ENCODE measurements at regions of chr17 and their contacts with region 1.

Region 1: GRCh38 chr17:48878918-48879898 is 13.4 kb upstream of the ATP5MC1 start:
- DNase-seq: peak; percentile 48
- H3K4me3 ChIP-seq: no peak overlapping the region
- H3K27ac ChIP-seq: no peak overlapping the region
- H3K4me1 ChIP-seq: no peaks in the 10 kb centered on the region
- H3K27me3 ChIP-seq: no peaks in the 10 kb centered on the region
- CTCF ChIP-seq: peak; percentile 94 to 98

Region 2: DNA sequence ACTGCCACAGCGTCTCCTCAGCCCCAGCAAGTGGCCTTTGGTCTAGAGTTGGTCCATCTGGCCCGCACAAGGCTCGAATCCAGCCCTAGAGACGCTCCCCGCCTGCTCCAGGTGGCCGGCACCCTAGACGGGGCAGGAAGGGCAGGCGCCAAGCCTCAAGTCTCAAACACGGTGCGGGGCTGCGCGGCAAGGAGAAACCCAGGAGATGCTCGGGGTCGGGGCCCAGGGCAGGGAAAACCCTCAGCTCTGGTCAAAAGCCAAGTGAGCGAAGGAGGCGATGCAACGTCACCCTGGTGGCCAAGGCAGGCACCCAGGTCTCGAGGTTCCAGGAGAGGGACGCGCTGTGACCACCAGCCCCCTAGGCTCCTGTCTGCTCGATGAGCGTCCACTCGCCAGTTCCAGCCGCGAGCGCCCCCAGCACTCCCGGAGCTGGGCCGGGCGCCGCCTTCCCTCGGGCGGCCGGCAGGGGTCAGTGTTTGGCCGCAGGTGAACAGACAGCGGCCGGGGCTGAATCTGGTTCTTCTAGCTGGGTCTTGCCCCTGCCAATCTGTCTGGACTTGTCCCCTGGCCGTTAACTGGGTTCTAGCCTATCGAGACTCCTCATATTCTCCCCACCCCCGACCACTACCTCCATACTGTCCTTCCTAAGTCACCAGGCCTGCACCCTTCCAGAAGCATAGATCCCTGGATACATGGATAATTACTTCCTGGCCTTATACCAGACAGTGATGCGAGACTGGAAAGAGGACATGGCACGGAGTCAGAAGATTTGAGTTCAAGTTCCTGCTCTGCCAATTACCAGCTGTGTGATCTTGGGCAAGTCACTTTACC is 200.9 kb before region 1 on chr17:
- CTCF ChIA-PET with region 1: interaction called, 10 read pairs
- dilution Hi-C with region 1: no loop called
- in situ Hi-C with region 1: loop called (anchors 5 kb)
- intact Hi-C with region 1: loop called (anchors 1 kb)
- DNase-seq: peak; percentile 69
- H3K4me3 ChIP-seq: no peak overlapping the region
- H3K27ac ChIP-seq: no peak overlapping the region
- H3K4me1 ChIP-seq: peaks cover 10% of the 10 kb centered on the region
- H3K27me3 ChIP-seq: peaks cover 2% of the 10 kb centered on the region
- CTCF ChIP-seq: peak; percentile 78 to 96

Region 3: DNA sequence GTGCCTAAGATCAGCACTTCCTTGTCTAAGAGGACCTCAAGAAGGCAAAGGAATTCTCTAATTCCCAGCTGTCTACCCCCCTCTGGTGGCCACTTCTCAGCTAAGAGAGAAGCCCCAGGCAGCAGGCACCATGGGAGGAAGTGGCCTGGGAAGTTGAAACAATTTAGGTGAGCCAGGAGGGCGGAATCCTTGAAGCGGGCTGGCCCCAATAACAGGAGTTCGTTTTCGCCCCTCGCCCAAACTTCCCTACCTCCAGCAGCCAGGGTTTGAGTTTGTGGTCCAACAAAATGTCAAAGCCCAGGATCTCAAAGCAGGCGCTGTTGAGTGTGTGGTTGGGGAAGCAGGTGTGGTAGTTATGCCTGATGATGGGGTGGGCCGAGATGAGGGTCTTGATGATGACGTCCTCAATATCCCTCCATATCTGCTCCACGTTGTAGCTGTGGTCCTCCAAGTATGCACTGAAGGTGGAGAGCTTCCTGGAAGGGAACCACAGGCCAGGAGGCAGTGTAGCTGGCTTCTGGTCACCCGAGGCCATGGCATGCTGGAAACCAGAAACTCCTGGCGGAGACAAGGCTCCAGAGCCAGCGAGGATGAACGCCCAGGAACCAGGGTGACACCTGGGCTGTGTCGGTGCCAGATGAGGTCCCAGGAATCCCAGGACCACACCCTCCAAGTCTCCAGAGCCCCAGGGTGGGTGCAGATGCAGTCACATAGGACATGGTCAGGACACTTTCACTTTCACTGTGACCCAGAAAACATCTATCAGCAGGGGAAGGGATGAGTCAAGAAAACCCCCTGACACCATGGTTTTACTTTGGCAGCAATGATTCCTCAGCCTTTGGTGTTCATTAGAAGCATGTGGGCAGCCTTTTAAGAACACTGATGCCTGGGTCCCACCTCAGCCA is 87.8 kb before region 1 on chr17:
- CTCF ChIA-PET with region 1: interaction called, 3 read pairs
- dilution Hi-C with region 1: no loop called
- in situ Hi-C with region 1: no loop called
- intact Hi-C with region 1: loop called (anchors 1 kb)
- DNase-seq: peak; percentile 68
- H3K4me3 ChIP-seq: no peak overlapping the region
- H3K27ac ChIP-seq: no peak overlapping the region
- H3K4me1 ChIP-seq: no peaks in the 10 kb centered on the region
- H3K27me3 ChIP-seq: no peaks in the 10 kb centered on the region
- CTCF ChIP-seq: peak; percentile 72 to 82

Region 4: GRCh38 chr17:48816774-48817590 is 62.2 kb before region 1 on chr17 and contains the start of gene TTLL6:
- CTCF ChIA-PET with region 1: interaction called, 8 read pairs
- dilution Hi-C with region 1: no loop called
- in situ Hi-C with region 1: loop called in 1 of 2 experiments (anchors 5 kb)
- intact Hi-C with region 1: loop called (anchors 1 kb)
- DNase-seq: peak; percentile 84
- H3K4me3 ChIP-seq: peak within 1 kb of the TSS; percentile 16 to 48 (median 36)
- H3K27ac ChIP-seq: no peak within 1 kb of the TSS
- H3K4me1 ChIP-seq: peaks cover 6% of the 10 kb centered on the region
- H3K27me3 ChIP-seq: peaks cover 3% of the 10 kb centered on the region
- CTCF ChIP-seq: no peak
- total RNA-seq, gene TTLL6: not detected

Measured in mammary epithelial cell (primary cell).